ENCODE measurements at regions of chr12 and their contacts with region 1.

Region 1: DNA sequence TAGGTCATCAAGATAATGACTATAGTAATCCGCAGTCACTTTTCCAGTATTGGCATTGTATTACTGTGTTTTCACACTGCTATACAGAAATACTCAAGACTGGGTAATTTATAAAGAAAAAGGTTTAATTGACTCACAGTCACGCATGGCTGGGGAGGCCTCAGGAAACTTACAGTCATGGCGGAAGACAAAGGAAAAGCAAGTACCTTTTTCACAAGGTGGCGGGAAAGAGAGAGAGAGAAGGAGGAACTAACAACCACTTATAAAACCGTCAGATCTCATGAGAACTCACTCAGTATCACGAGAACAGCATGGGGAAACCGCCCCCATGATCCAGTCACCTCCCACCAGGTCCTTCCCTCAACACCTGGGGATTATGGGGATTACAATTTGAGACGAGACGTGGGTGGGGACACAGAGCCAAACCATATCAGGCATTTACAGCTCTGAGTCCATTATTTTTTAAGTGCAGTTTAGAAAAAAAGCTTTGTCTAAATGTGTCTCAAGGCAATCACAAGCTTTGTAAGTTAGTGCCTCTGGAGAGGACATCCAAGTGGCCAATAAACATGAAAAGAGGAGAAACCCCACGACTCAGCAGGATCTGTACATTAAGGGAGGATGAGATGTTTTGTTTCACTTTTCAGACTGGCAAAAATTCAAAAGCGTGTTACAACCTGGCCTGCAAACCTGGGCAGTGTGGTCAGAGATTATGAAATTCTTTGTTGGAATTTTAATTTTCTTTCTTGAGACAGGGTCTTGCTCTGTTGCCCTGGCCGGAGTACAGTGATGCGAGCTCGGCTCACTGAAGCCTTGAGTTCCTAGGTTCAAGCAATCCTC is 82.0 kb downstream of the DNAH10 start:
- DNase-seq: no peak

Region 2: DNA sequence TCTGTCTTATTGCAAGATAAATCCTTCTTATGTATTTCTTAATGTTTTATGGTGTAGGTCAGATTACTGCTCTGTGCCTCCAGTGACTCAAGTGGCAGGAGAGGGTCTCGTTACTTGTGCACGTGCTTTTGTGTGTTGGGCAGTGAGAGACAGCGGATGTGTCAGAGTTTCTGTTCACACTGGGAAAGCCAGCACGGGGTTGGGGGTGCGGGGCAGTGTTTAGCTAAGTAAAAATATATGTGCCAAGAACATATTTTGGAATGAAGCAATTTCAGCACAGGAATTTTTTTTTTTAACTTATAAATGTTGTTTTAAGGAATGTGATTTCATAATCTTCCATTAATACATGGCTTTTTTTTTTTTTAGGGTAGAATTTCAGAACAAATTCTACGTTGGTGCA is 86.6 kb before region 1 on chr12:
- in situ Hi-C with region 1: loop called (anchors 10 kb)
- DNase-seq: no peak